B cell (primary cell): ENCODE measurements at regions of chr12 and their contacts with region 1.

Region 1: DNA sequence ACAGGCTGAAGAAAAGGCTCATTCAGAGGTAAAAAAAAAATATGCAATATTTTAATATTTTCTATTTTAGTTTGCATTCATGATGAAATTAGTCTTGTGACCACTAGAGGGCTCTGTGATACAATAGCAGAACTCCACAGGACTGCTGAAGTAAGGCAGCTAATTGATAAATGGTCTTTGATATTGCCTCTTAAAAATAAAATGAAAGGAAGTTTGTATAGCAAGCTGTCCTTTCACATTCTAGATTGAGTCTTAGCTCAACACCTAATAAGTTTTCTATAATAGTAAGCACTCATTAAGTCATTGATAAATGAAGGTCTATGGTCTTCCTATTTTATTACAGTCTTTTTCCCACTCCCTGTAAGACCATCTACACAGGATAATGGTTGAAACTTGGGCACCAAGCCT is 315.7 kb downstream of the NAV3 start:
- DNase-seq: peak; percentile 27
- ATAC-seq: peak; percentile 43
- H3K4me3 ChIP-seq: no peak overlapping the region
- H3K4me3 Mint-ChIP-seq: no peak overlapping the region
- H3K27ac ChIP-seq: no peak overlapping the region
- H3K27ac Mint-ChIP-seq: no peak overlapping the region
- H3K4me1 ChIP-seq: no peaks in the 10 kb centered on the region
- H3K4me1 Mint-ChIP-seq: no peaks in the 10 kb centered on the region
- H3K27me3 ChIP-seq: no peaks in the 10 kb centered on the region
- H3K27me3 Mint-ChIP-seq: no peaks in the 10 kb centered on the region
- CTCF ChIP-seq: peak; percentile 96

Region 2: DNA sequence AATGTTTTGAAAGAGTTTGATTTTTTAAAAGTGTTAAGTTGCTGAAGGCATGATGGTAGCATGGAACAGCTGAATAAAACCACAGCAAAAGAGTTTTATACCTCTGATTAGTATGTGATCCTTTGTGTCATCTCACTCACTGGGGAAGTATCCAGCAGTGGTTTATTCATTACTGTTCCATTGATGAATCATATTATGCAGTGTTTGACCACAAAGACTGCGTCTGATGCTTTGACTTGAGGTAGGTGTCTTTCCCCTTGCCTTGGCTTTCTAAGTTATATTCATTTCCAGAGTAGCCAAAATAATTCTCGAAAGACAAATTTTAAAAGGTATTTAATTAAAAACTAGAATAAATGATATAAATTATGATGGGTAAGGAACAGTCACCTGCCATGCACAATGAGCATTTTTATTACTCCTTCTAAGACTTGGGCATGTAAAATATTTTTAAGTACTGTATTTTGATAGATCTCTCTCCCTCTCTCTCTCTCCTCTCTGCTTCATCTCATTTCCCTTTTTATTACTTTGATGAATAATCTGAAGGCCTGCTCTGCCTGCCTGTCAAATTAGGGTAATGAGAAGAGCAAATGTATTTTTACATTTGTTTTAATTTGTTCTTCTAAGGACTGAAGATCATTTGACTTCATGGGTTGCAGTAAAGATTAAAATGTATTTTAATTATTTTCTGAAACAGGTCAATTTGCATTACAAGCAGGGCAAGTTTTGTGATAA is 150.8 kb before region 1 on chr12:
- CTCF ChIA-PET with region 1: no interaction called
- POLR2A ChIA-PET with region 1: no interaction called
- intact Hi-C with region 1: loop called (anchors 5 kb)
- DNase-seq: no peak
- ATAC-seq: no peak
- H3K4me3 ChIP-seq: no peak overlapping the region
- H3K4me3 Mint-ChIP-seq: no peak overlapping the region
- H3K27ac ChIP-seq: no peak overlapping the region
- H3K27ac Mint-ChIP-seq: no peak overlapping the region
- H3K4me1 ChIP-seq: peaks cover 15 to 16% of the 10 kb centered on the region in 2 donors
- H3K4me1 Mint-ChIP-seq: peaks cover 23% of the 10 kb centered on the region
- H3K27me3 ChIP-seq: no peaks in the 10 kb centered on the region
- H3K27me3 Mint-ChIP-seq: no peaks in the 10 kb centered on the region
- CTCF ChIP-seq: no peak

Region 3: GRCh38 chr12:78898416-78898815 is 752.0 kb after region 1 on chr12:
- CTCF ChIA-PET with region 1: no interaction called
- POLR2A ChIA-PET with region 1: no interaction called
- intact Hi-C with region 1: no loop called
- DNase-seq: no peak
- ATAC-seq: no peak
- H3K4me3 ChIP-seq: no peak overlapping the region
- H3K4me3 Mint-ChIP-seq: no peak overlapping the region
- H3K27ac ChIP-seq: no peak overlapping the region
- H3K27ac Mint-ChIP-seq: no peak overlapping the region
- H3K4me1 ChIP-seq: no peaks in the 10 kb centered on the region
- H3K4me1 Mint-ChIP-seq: no peaks in the 10 kb centered on the region
- H3K27me3 ChIP-seq: no peaks in the 10 kb centered on the region
- H3K27me3 Mint-ChIP-seq: no peaks in the 10 kb centered on the region
- CTCF ChIP-seq: no peak

Region 4: GRCh38 chr12:79174626-79175025 is 1028.3 kb after region 1 on chr12:
- CTCF ChIA-PET with region 1: no interaction called
- POLR2A ChIA-PET with region 1: no interaction called
- intact Hi-C with region 1: loop called (anchors 2 kb)
- DNase-seq: no peak
- ATAC-seq: no peak
- H3K4me3 ChIP-seq: no peak overlapping the region
- H3K4me3 Mint-ChIP-seq: no peak overlapping the region
- H3K27ac ChIP-seq: no peak overlapping the region
- H3K27ac Mint-ChIP-seq: no peak overlapping the region
- H3K4me1 ChIP-seq: no peaks in the 10 kb centered on the region
- H3K4me1 Mint-ChIP-seq: no peaks in the 10 kb centered on the region
- H3K27me3 ChIP-seq: no peaks in the 10 kb centered on the region
- H3K27me3 Mint-ChIP-seq: no peaks in the 10 kb centered on the region
- CTCF ChIP-seq: no peak

Region 5: GRCh38 chr12:79373896-79374499 is 1227.6 kb after region 1 on chr12:
- CTCF ChIA-PET with region 1: interaction called, 4 read pairs
- POLR2A ChIA-PET with region 1: no interaction called
- intact Hi-C with region 1: loop called (anchors 10 kb)
- DNase-seq: peak; percentile 12
- ATAC-seq: no peak
- H3K4me3 ChIP-seq: no peak overlapping the region
- H3K4me3 Mint-ChIP-seq: no peak overlapping the region
- H3K27ac ChIP-seq: no peak overlapping the region
- H3K27ac Mint-ChIP-seq: no peak overlapping the region
- H3K4me1 ChIP-seq: no peaks in the 10 kb centered on the region
- H3K4me1 Mint-ChIP-seq: no peaks in the 10 kb centered on the region
- H3K27me3 ChIP-seq: no peaks in the 10 kb centered on the region
- H3K27me3 Mint-ChIP-seq: peaks cover 2% of the 10 kb centered on the region
- CTCF ChIP-seq: peak; percentile 63